Sigmoid colon (tissue), 7 donors: ENCODE measurements at regions of chr4 and their contacts with region 1.

Region 1: GRCh38 chr4:56424697-56425514 is 10.5 kb downstream of the PPAT start:
- DNase-seq: no peak
- H3K4me3 ChIP-seq: no peak overlapping the region
- H3K27ac ChIP-seq: no peak overlapping the region
- H3K4me1 ChIP-seq: no peaks in the 10 kb centered on the region
- H3K27me3 ChIP-seq: no peaks in the 10 kb centered on the region
- CTCF ChIP-seq: peak in 3 of 4 experiments; percentile 34 to 60 (median 41)
- EP300 ChIP-seq: no peak
- POLR2A ChIP-seq: no peak

Region 2: GRCh38 chr4:55561889-55562288 is 863.0 kb before region 1 on chr4:
- intact Hi-C with region 1: no loop called
- DNase-seq: no peak
- H3K4me3 ChIP-seq: no peak overlapping the region
- H3K27ac ChIP-seq: no peak overlapping the region
- H3K4me1 ChIP-seq: no peaks in the 10 kb centered on the region
- H3K27me3 ChIP-seq: no peaks in the 10 kb centered on the region
- CTCF ChIP-seq: no peak
- EP300 ChIP-seq: no peak
- POLR2A ChIP-seq: no peak

Region 3: GRCh38 chr4:56840559-56840958 is 415.7 kb after region 1 on chr4:
- intact Hi-C with region 1: loop called (anchors 2 kb)
- DNase-seq: no peak
- H3K4me3 ChIP-seq: no peak overlapping the region
- H3K27ac ChIP-seq: no peak overlapping the region
- H3K4me1 ChIP-seq: peaks cover 0 to 7% (median 0%) of the 10 kb centered on the region in 4 donors
- H3K27me3 ChIP-seq: no peaks in the 10 kb centered on the region
- CTCF ChIP-seq: no peak
- EP300 ChIP-seq: no peak
- POLR2A ChIP-seq: no peak

Region 4: DNA sequence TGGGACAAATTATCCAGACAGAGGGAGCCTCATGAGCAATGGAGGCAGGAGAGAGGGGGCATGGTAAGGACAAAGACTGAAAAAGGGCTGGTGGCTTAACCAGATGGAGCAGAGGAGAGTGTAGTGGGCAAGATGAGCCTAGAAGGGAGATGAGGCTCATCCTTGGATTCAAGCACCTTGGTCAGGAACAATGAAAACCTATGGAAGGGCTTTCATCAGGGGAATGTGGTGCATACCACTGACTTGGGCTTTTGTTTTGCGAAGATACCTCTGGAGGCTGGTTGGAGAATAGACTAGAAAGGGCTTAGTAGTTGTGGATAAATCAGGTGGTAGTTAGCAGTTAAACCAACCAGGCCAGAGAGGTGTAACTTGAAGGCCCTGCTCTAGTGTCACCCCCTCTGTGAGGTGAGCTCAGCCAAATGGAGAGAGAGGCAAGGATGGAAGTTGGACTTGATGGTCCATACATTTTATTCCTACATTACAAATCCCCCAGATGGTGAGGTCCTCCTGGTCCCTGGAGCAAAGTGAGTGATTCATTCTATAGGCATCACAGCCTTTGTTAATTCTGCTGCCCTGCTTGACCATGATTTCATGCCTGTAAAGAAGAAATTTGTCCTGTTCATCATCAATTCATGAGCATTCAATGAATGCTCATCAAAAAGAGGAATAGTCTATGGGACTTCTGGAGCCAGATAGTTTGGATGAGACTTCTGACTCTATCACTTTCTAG is 950.1 kb after region 1 on chr4:
- intact Hi-C with region 1: no loop called
- DNase-seq: no peak
- H3K4me3 ChIP-seq: no peak overlapping the region
- H3K27ac ChIP-seq: no peak overlapping the region
- H3K4me1 ChIP-seq: no peaks in the 10 kb centered on the region
- H3K27me3 ChIP-seq: no peaks in the 10 kb centered on the region
- CTCF ChIP-seq: no peak
- EP300 ChIP-seq: no peak
- POLR2A ChIP-seq: no peak